Ovary (tissue), 10 donors: ENCODE measurements at regions of chr15 and their contacts with region 1.

Region 1: GRCh38 chr15:74540761-74541493 is at the start of gene ARID3B:
- DNase-seq: peak; percentile 95 to 98 (median 96)
- H3K4me3 ChIP-seq: peak within 1 kb of the TSS; percentile 69
- H3K27ac ChIP-seq: no peak within 1 kb of the TSS
- H3K4me1 ChIP-seq: peaks cover 9% of the 10 kb centered on the region
- H3K27me3 ChIP-seq: no peaks in the 10 kb centered on the region
- CTCF ChIP-seq: no peak
- EP300 ChIP-seq: no peak
- POLR2A ChIP-seq: no peak
- total RNA-seq, gene ARID3B: 1.6 to 4.9 (median 2.8) TPM

Region 2: DNA sequence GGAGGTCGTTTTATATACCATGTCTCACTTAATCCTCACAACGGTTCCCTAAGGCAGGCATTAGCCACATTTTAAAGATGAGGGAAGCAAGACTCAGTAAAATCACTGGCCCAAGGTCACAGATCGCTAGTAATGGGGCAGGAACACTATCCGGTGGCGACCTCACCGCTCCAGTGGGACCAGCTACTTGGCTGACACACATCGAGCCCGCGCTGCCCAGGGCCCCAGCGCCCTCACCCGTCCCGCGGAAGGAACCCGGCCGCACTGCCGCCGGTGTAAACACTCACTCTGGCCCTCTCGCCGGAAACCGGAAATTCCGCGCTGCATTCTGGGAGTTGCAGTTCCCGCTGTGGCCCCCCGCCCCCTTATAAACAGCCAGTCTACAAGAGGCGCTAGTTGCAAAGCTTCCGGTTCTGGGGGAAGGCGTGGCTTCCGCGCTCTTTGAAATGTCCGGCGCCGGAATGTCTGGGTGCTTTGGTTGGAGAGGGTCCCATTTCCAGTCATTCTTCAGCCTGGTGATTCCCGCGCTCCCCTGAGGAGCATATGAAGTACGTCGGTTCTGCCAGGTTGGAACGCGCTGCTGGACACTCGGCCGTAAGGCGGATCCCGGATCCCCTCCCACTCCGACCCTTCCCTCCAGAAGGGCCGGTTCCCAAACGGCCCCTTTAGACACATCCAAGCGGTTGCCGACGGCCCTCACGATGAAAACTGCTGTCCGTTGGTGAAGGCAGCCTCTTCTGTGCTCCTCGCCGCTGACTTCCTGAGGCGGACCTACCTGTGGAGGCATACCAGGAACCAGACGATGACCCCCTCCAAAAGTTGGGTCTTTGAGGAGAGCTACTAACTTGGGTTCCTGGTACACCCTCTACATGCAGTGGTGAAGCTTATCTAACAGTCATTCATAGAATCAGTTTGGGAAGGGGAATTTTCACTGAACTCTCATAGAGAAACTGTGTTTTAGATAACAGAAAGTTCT is 79.8 kb before region 1 on chr15 and contains the start of gene UBL7:
- intact Hi-C with region 1: loop called in 1 of 4 experiments (anchors 10 kb)
- DNase-seq: peak; percentile 94 to 96 (median 95)
- H3K4me3 ChIP-seq: peak within 1 kb of the TSS; percentile 45
- H3K27ac ChIP-seq: peak within 1 kb of the TSS; percentile 31 to 61
- H3K4me1 ChIP-seq: peaks cover 3% of the 10 kb centered on the region
- H3K27me3 ChIP-seq: no peaks in the 10 kb centered on the region
- CTCF ChIP-seq: peak in 1 of 3 donors; percentile 22
- EP300 ChIP-seq: no peak
- POLR2A ChIP-seq: peak; percentile 76
- total RNA-seq, gene UBL7: 26.4 to 43.4 (median 29.2) TPM

Region 3: DNA sequence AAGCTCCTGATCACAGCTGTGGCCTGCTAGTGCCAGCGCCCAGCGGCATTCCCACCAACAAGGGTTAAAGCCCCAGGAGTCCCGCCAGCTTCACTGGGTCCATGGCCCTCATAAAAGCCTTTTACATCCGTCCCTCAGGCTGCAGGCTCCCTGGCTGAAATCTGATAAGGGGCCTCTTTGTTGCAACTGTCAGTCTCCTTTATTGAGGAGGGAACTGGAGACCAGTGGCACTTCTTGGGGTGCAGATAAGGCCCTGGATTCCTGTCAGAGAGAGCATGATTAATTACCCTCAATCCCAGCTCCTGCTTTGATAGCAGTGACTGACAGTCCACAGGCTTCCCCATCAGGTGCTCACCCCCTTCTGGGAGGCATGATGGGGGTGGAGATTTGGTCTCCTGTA is 43.9 kb after region 1 on chr15:
- intact Hi-C with region 1: no loop called
- DNase-seq: no peak
- H3K4me3 ChIP-seq: no peak overlapping the region
- H3K27ac ChIP-seq: no peak overlapping the region
- H3K4me1 ChIP-seq: no peaks in the 10 kb centered on the region
- H3K27me3 ChIP-seq: no peaks in the 10 kb centered on the region
- CTCF ChIP-seq: no peak
- EP300 ChIP-seq: no peak
- POLR2A ChIP-seq: no peak